ENCODE measurements at regions of chr2 and their contacts with region 1.

Region 1: GRCh38 chr2:64404002-64404731 is 49.8 kb upstream of the LGALSL start:
- DNase-seq: peak; percentile 79 to 84 (median 83)
- ATAC-seq: peak; percentile 32
- H3K4me3 ChIP-seq: no peak overlapping the region
- H3K4me1 ChIP-seq: peaks cover 70% of the 10 kb centered on the region
- CTCF ChIP-seq: no peak

Region 2: DNA sequence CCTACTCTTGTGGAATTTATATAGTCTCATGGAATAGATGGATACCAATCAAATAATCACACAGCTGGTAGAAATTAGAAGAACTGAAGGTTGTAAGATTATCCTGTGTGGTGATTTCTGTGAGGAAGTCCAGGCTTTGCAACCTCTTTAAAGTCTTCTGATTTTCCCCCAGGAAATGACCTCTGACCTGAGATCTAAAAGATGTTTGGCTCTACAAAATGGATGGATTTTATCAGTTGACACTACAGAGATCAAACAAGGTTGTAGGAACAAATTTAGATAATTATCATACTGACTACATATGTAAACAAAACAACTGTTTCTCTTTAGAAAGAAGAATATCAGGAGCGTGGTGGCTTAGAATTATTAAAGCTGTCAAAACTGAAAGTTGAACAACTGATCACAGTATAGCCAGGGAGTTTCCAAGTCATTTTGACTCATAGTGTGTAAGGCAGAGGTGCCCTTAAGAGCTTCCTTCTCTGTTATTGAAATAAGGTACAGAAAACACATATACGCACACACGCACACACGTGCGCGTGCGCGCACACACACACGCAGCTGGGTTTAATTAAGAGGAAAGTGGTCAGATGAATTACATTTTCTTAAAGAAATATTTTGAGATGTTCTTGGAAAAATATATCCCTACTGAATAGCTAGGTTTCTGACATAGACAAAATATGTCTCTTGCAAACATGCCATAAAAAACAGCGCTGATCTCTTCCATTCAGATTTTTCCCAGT is 224.4 kb before region 1 on chr2:
- intact Hi-C with region 1: no loop called
- DNase-seq: no peak
- ATAC-seq: peak; percentile 25
- H3K4me3 ChIP-seq: no peak overlapping the region
- H3K4me1 ChIP-seq: no peaks in the 10 kb centered on the region
- CTCF ChIP-seq: no peak

Region 3: DNA sequence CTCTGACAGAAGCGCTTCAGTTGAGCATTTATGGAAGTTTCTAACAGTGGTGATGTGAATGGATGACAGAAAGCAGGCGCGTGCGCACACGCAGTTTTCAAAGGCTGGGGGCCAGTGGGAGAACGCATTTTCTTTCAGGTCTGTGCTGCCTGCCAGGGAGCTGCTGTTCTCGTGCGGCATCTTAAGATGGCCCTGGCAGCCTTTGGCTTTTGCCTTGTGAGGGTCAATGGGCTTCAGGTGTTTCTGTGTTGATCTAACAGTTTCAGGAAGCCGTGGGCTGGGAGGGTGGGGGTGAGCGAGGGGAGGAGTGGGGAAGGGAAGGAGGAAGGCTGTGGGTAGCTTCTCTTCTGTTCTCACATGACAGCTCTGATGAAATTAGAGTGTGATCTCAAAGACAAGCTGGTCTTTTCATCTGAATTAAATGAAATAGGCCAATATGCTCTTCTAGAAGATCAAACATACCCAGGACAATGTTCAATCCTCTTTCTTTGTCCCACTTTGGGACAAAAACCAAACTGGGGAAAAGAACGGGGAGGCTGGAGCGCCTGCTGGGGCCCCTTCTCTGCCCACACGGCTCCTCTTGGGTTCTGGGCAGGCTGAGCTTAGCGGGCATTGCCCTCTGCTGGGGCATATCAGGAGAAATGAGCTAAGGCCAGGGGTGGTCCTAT is 76.5 kb before region 1 on chr2:
- intact Hi-C with region 1: no loop called
- DNase-seq: peak; percentile 40 to 62 (median 49)
- ATAC-seq: peak; percentile 25
- H3K4me3 ChIP-seq: no peak overlapping the region
- H3K4me1 ChIP-seq: peaks cover 12% of the 10 kb centered on the region
- CTCF ChIP-seq: no peak

Region 4: DNA sequence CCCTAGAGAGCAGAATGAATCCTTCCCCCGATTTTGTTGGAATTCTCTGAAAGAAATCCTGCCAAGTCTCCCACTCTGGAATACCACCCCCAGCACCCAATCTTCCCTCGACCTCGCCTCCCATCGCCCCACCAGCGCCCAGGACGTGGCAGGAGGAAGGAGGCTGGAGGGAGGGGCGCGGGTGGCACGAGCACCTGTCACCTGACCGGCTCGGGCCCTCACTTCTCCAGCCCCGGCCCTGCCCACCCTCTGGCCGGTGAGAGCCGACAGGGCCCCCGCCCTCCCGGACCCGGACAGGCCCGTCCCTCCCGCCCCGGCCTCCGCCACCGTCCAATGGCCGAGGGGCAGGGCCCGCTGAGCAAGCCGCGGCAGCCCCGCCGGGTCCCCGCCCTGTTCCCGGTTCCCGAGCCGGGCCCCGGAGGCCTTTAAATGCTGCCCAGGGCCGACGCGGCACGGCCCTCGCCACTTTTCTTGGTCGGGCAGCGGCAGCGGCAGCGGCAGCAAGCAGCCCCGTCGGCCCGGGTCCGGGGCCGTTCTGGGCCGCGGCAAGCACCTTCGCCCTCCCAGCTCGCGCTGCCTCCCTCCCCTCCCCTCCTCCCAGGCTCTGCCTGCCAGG is 49.7 kb after region 1 on chr2 and contains the start of gene LGALSL:
- intact Hi-C with region 1: loop called in 1 of 2 experiments (anchors 10 kb)
- DNase-seq: peak; percentile 87 to 95 (median 91)
- ATAC-seq: peak; percentile 90
- H3K4me3 ChIP-seq: peak within 1 kb of the TSS; percentile 64
- H3K4me1 ChIP-seq: no peaks in the 10 kb centered on the region
- CTCF ChIP-seq: no peak
- total RNA-seq, gene LGALSL: 30.7 to 40.9 (median 37.6) TPM

Measured in mucosa of descending colon (tissue), 3 donors.